ENCODE measurements at regions of chr5 and their contacts with region 1.

Region 1: GRCh38 chr5:32329308-32329834 is 16.6 kb upstream of the MTMR12 start:
- DNase-seq: peak; percentile 63
- ATAC-seq: peak; percentile 94

Region 2: GRCh38 chr5:31886206-31886605 is 443.2 kb before region 1 on chr5:
- intact Hi-C with region 1: no loop called
- DNase-seq: no peak
- ATAC-seq: no peak

Region 3: GRCh38 chr5:32232441-32233219 is 96.7 kb before region 1 on chr5:
- intact Hi-C with region 1: loop called (anchors 5 kb)
- DNase-seq: peak; percentile 80
- ATAC-seq: peak; percentile 90

Measured in left ventricle myocardium superior (tissue), 1 donor.